Activated CD8-positive, alpha-beta memory T cell treated with anti-CD3 and anti-CD28 coated beads, Interleukin-2, amount 10 ng/mL, durations not matched to agents 7 days and 5 days (primary cell): ENCODE measurements at regions of chr11 and their contacts with region 1.

Region 1: DNA sequence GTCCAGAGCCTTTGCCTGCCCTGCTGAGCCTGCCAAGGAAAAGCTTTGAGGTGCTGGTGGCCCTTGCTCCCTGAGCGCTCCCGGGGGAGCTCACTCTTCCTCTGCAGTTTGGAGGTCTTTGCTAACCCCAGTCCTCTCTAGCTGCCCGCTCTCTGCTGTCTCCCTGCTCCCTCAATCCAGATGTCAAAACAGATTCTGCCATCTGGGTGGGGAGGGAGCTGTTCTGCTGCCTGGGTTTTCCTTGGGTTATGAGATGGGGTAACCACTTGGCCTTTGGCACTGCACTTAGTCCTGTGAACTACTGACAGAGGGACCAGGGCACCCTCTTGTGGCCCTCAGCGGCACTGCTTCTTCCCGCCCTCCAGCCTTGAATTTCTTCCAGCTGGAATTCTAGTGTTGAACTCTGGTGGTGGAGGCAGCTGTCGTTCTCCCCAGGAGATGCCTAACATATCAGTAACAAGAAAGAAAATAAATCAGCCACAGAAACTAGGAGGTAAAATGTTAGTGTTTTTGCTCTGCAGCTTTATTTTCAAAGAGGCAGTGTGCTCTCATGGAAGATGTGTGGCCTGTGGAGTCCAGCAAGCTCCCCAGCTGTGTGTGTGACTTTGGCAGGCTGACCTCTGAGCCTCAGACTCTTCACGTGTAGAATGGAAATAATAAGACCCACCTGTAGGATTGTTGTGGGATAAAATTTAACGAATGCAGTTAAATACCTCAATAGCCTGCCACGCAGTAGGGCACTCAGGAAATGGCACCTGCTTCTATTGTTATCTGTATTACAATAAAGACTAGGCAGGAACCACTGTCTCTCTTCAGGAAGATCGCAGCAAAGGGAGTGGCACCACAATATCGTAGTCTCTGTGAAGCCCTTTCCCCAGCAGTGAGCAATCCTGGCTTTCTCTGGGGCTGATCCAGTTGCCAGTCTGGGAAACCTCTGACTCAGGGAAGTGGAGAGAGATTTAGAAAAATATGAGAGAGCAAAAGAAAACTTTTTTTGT is 23.4 kb downstream of the ARFGAP2 start:
- DNase-seq: peak; percentile 65
- ATAC-seq: peak; percentile 56
- H3K4me3 Mint-ChIP-seq: no peak overlapping the region
- H3K27ac Mint-ChIP-seq: no peak overlapping the region
- H3K4me1 Mint-ChIP-seq: peaks cover 32% of the 10 kb centered on the region
- H3K27me3 Mint-ChIP-seq: no peaks in the 10 kb centered on the region

Region 2: DNA sequence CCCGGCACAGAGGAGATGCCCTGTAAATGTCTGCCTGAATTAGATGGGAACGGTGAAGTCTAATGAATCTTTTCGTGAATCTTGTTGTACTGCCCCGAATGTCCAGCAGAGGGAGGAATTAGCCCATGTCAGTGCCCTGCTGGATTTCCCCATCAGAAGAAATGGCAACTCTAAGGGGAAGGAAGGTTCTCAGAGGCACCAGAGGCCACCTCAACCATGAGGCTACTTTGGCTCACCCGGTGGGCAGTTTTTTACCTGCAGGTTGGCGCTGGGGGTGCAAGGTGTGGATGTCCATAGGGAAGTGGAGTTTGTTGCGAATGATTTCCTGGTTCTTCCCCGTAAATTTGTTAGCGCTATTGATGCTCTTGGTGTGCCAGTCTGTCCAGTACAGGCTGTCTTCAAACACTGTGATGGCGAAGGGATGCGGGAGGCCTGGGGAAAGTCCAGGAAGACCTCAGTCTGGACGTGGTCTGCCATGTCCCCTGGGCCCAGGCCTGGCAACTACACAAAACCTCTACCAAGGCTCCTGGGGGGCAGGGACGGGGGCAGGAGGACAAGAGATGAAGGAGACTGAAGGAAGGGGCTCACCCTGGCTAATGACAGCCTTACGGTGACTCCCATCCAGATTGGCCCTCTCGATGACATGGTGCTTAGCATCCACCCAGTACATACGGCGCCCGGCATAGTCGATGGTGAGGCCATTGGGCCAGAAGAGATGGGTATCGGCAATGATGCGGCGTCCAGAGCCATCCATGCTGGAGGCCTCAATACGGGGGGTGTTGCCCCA is 263.4 kb before region 1 on chr11:
- CTCF ChIA-PET with region 1: interaction called, 32 read pairs
- DNase-seq: peak; percentile 81
- ATAC-seq: peak; percentile 83
- H3K4me3 Mint-ChIP-seq: no peak overlapping the region
- H3K27ac Mint-ChIP-seq: no peak overlapping the region
- H3K4me1 Mint-ChIP-seq: peaks cover 3% of the 10 kb centered on the region
- H3K27me3 Mint-ChIP-seq: peaks cover 15% of the 10 kb centered on the region

Region 3: DNA sequence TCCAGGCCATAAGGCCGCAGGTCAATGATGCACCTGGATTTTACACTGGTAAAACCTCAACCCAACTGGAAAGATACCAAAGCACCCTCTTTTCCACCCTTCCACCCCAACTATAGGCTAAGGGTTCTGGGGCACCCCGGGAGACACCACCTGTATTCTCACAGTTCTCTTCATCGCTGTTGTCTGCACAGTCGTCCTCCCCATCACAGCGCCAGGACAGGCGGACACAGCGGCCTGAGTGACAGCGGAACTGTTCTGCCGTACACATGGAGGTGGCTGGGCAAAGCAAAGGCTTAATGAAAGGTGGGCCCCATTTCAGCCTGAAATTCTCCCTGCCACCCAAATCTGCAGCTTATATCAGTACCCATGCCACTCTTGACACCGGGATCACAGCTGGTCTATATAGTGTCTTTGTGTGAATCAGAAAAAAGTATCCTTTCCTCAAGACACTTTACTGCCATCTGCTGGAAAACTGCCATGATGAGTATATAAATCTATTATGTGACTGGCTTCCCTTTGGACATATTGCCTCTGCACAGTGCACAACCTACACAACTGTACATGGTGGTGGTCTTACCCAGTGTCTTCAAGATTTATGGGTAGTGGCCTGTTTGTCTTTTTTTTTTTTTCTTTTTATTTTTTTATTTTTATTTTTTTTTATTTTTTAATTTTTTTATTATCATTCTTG is 256.4 kb before region 1 on chr11:
- CTCF ChIA-PET with region 1: interaction called, 32 read pairs
- DNase-seq: no peak
- ATAC-seq: peak; percentile 47
- H3K4me3 Mint-ChIP-seq: no peak overlapping the region
- H3K27ac Mint-ChIP-seq: no peak overlapping the region
- H3K4me1 Mint-ChIP-seq: no peaks in the 10 kb centered on the region
- H3K27me3 Mint-ChIP-seq: no peaks in the 10 kb centered on the region

Region 4: DNA sequence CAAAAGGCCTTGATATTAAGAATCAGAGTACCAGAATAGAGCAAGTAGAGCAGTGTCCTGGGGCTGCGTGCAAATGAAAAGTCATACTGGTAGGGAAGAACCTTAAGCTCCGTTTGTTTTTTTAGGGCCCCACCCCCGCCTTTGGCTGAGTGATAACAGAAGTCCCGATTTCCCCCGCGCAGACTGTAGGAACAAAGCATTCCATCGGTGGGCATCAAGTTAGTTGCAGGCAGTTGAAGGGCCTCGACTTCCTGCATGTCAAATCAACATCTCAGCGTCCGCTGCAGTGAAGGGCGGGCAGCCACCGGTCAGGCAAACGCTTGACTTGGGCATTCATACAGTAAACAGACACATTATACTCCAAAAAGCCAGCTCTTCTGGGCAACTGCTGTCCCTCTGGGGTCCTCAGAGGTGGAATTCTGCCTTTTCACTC is 246.6 kb before region 1 on chr11:
- CTCF ChIA-PET with region 1: interaction called, 10 read pairs
- DNase-seq: no peak
- ATAC-seq: no peak
- H3K4me3 Mint-ChIP-seq: no peak overlapping the region
- H3K27ac Mint-ChIP-seq: no peak overlapping the region
- H3K4me1 Mint-ChIP-seq: no peaks in the 10 kb centered on the region
- H3K27me3 Mint-ChIP-seq: peaks cover 28% of the 10 kb centered on the region

Region 5: DNA sequence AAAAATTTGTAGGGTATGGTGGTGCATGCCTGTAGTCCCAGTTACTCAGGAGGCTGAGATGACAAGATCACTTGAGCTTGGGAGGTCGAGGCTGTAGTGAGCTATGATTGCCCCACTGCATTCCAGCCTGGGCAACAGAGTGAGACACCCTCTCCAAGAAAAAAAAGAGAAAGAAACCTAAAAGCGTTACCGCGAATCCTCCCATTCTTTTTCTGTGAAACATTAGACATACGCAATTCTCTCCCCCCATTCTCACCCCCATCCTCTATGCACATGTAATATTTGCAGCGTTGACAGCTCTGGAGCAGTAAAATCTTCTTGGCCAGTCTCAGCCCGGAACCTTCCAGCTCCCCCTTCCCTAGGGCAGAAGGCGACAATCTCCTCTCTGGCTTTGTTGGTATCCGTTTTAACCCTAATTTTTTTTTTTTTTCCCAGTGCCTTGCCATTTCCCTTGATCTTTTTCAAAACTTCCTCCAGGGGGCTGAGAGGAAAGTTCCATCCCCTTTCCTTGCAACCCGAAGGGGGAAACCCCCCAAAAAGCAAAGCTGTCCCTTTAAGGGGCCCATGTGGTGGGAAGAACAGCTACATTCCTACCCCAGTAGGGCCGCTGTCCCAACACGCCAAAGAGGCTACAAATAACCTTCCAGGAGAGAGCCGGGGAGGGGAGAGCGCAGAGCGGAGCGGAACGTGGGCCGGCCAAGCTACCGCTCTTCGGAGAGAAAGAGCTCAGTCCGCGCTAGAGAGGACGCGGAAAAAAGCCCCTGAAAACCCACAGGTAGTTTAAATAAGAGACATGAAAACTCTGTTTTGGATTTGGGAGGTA is 236.8 kb before region 1 on chr11:
- CTCF ChIA-PET with region 1: interaction called, 31 read pairs
- DNase-seq: no peak
- ATAC-seq: peak; percentile 11
- H3K4me3 Mint-ChIP-seq: peak overlapping the region; percentile 44
- H3K27ac Mint-ChIP-seq: no peak overlapping the region
- H3K4me1 Mint-ChIP-seq: peaks cover 26% of the 10 kb centered on the region
- H3K27me3 Mint-ChIP-seq: peaks cover 72% of the 10 kb centered on the region